ENCODE measurements at regions of chr7 and their contacts with region 1.

Region 1: GRCh38 chr7:106273009-106273668 is 11.6 kb downstream of the NAMPT start:
- DNase-seq: no peak
- ATAC-seq: peak in 6 of 8 donors; percentile 28 to 71 (median 48)
- H3K4me3 ChIP-seq: no peak overlapping the region
- H3K27ac ChIP-seq: peak overlapping the region in 7 of 10 donors; percentile 2 to 57 (median 45)
- H3K4me1 ChIP-seq: peaks cover 0 to 64% (median 26%) of the 10 kb centered on the region in 9 donors
- H3K27me3 ChIP-seq: no peaks in the 10 kb centered on the region
- CTCF ChIP-seq: no peak

Region 2: GRCh38 chr7:106187613-106188350 is 85.4 kb before region 1 on chr7:
- intact Hi-C with region 1: loop called in 1 of 10 experiments (anchors 10 kb)
- DNase-seq: no peak
- ATAC-seq: no peak
- H3K4me3 ChIP-seq: no peak overlapping the region
- H3K27ac ChIP-seq: no peak overlapping the region
- H3K4me1 ChIP-seq: peaks cover 0 to 7% (median 0%) of the 10 kb centered on the region in 9 donors
- H3K27me3 ChIP-seq: no peaks in the 10 kb centered on the region
- CTCF ChIP-seq: no peak

Region 3: DNA sequence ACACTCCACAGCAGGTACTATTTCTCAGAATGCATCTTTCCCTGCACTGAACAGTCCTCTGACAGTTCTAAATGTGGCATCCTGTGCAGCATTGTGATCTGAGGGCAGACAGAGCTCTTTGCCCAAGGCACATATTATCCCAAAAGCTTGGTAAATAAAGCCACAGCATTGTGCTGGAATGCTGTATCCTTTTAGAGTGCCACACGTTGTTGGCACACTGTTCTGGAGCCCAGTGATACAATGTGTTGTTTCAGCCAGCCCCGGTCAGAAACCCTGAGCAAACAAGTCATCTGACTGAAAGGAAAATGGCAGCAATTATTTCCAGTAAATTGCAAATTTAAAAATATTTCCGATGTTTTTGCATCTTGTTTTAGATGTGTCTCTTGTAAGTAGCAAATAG is 33.7 kb before region 1 on chr7:
- intact Hi-C with region 1: no loop called
- DNase-seq: no peak
- ATAC-seq: peak in 7 of 8 donors; percentile 39 to 82 (median 44)
- H3K4me3 ChIP-seq: no peak overlapping the region
- H3K27ac ChIP-seq: peak overlapping the region in 4 of 10 donors; percentile 1 to 44 (median 30)
- H3K4me1 ChIP-seq: peaks cover 0 to 20% (median 3%) of the 10 kb centered on the region in 9 donors
- H3K27me3 ChIP-seq: no peaks in the 10 kb centered on the region
- CTCF ChIP-seq: no peak